A549 (cell line): ENCODE measurements at regions of chr12 and their contacts with region 1.

Region 1: DNA sequence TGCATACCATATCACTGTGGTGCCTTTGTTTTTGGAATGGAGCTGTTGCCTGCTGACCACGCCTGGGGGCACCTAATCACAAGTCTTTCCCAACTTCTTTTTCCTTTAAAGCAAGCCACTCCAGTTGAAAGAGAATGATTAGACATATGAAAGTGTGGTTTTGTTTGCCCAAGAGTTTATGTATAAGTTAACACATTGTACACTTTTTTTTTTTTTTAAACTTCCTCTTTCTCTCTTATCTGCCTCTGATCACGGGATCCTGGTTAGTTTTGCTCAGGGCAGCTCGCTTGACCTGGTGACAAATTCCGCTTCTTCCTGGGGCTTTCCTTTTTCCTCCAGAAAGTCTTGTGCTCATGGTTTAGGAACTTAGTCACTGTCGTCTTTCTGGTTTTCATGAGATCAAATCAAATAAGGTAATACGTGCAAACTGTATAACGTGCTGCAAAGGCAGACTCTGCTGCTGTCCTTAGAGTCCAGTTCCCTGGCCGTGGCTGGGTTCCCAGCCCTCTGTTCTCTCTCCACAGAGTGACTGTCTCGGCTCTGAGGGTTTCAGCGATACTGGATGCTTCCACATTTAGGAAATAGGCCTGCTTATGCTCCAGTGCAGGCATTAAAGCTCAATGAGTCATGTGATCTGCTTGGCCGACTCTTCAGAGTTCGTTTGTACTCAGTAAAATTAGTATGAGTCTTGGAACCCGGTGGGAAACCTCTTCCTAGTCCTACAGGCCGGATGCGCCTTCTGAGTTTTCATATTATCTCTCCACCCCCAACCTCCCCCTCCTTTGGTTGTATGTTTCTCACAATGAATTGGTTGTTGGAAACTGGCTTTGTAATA is 15.2 kb downstream of the RASSF3 start:
- DNase-seq: peak; percentile 76 to 92
- ATAC-seq: peak; percentile 95 to 96
- H3K4me3 ChIP-seq: peak overlapping the region; percentile 27
- H3K27ac ChIP-seq: peak overlapping the region; percentile 86 to 93
- H3K4me1 ChIP-seq: peaks cover 65% of the 10 kb centered on the region
- CTCF ChIP-seq: 0 out of 3 replicates have a peak, but pooled peaks have one; percentile 7
- EP300 ChIP-seq: peak; percentile 58 to 60; a peak in 2 of 5 replicates
- POLR2A ChIP-seq: 0 out of 2 replicates have a peak, but pooled peaks have one; percentile 14
- RAD21 ChIP-seq: peak; percentile 23 to 49

Region 2: DNA sequence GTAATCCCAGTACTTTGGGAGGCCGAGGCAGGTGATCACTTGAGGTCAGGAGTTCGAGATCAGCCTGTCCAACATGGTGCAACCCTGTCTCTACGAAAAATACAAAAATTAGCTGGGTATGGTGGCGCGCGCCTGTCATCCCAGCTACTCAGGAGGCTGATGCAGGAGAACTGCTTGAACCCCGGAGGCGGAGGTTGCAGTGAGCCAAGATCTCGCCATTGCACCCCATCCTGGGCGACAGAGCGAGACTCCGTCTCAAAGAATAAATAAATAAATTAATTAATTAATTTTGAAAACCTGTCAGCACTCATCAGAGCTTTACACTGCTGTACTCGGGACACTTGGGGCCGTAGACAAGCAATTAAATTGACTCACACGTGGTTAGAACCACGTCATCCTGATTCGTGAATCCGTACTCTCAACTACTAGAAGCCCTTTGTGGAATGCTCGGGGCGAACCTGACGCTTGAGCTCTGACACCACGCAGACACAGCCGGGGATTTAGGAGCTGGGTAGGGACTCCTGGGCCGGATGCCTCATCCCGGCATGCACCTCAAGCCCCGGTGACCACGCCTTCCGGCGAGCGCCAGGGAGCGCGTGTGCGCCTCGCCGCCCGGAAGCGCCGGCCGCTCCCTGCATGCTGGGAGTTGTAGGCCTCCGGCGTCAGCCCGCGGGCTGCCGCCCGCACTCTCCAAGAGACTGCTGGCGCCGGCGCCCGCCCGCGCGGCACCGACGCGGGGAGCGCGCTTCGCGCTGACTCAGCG is 221.6 kb before region 1 on chr12 and contains the start of gene XPOT:
- CTCF ChIA-PET with region 1: no interaction called
- POLR2A ChIA-PET with region 1: no interaction called
- DNase-seq: peak; percentile 97 to 99
- ATAC-seq: peak; percentile 94 to 95
- H3K4me3 ChIP-seq: peak within 1 kb of the TSS; percentile 85
- H3K27ac ChIP-seq: peak within 1 kb of the TSS; percentile 99
- H3K4me1 ChIP-seq: peaks cover 31% of the 10 kb centered on the region; the same call in 2 of the 3 replicates
- CTCF ChIP-seq: no peak
- EP300 ChIP-seq: no peak
- POLR2A ChIP-seq: peak; percentile 91
- RAD21 ChIP-seq: no peak
- polyA plus RNA-seq, gene XPOT: 206 and 229 TPM in 2 replicates

Region 3: DNA sequence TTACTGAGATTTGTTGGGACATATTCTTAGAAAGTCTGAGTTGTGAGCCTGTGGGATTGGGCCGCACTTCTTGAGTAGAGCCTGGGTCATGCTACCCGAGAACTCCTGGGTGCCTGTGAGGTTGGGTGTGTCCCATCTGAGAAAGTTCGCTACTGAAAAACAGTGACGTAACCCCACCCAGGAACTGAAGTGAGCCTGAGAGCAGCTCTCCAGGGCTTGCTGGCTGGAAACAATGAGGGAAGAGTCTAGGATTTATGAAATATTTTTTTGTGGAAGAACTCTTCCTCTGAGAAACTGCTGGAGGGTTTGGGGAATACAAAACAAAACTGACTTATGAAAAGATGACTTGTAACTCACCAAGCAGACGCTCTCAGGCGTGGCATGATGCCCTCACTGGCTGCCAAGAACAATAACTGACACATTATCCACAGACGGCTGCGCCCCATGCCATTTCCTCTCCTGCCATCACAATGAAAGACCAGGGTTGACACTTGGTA is 54.1 kb after region 1 on chr12:
- CTCF ChIA-PET with region 1: interaction called, 4 read pairs
- POLR2A ChIA-PET with region 1: interaction called, 13 read pairs
- DNase-seq: peak; percentile 82 to 91
- ATAC-seq: peak; percentile 85 to 86
- H3K4me3 ChIP-seq: peak overlapping the region; percentile 34
- H3K27ac ChIP-seq: peak overlapping the region; percentile 86 to 92
- H3K4me1 ChIP-seq: peaks cover 88% of the 10 kb centered on the region
- CTCF ChIP-seq: no peak
- EP300 ChIP-seq: no peak
- POLR2A ChIP-seq: no peak
- RAD21 ChIP-seq: no peak